GM10248 (cell line): ENCODE measurements at regions of chr18 and their contacts with region 1.

Region 1: GRCh38 chr18:58761241-58761969 is 90.1 kb downstream of the MALT1 start:
- DNase-seq: peak; percentile 71
- CTCF ChIP-seq: no peak

Region 2: GRCh38 chr18:58400337-58400870 is 361.0 kb before region 1 on chr18:
- CTCF ChIA-PET with region 1: interaction called, 14 read pairs
- POLR2A ChIA-PET with region 1: no interaction called
- DNase-seq: no peak
- CTCF ChIP-seq: no peak

Region 3: GRCh38 chr18:58493516-58494253 is 267.7 kb before region 1 on chr18:
- CTCF ChIA-PET with region 1: interaction called, 60 read pairs
- POLR2A ChIA-PET with region 1: no interaction called
- DNase-seq: peak; percentile 85
- CTCF ChIP-seq: peak; percentile 82

Region 4: DNA sequence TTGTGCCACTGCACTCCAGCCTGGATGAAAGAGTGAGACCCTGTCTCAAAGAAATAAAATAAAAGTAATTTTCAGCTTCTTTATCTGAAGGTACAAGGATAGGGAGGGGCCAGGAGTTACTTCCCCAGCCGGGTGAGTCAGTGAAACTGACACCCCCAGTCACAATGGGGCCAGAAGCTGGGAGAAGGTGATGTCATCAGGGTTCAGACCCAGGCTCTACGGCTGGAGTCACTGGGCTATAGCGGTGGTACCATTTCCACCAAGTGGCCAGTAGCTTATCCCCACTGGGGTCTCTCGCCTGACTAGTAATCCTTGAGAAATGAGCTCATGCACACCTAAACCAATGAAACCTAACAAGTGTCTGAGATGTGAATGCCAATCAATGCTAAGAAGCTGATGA is 240.4 kb before region 1 on chr18:
- CTCF ChIA-PET with region 1: interaction called, 366 read pairs
- POLR2A ChIA-PET with region 1: no interaction called
- DNase-seq: no peak
- CTCF ChIP-seq: no peak

Region 5: GRCh38 chr18:58699551-58699950 is 61.9 kb before region 1 on chr18:
- CTCF ChIA-PET with region 1: interaction called, 17 read pairs
- POLR2A ChIA-PET with region 1: no interaction called
- DNase-seq: no peak
- CTCF ChIP-seq: no peak